PC-9 (cell line): ENCODE measurements at regions of chr1 and their contacts with region 1.

Region 1: DNA sequence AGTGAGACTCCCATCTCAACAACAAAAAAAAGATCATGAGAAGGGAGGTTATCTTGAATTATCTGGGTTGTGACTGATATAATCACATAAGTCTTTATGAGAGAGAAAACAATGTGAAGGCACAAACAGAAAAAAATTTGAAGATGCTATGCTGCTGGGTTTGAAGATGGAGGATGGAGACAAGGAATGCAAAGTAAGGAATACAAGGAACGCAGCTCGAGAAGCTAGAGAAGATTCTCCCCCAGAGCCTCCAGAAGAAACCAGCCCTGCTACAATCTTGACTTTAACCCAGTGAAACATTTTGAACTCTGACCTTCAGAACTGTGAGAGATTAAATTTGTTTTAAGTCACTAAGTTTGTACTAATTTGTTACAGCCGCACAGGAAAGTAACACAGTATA is 15.0 kb downstream of the EVI5 start:
- DNase-seq: no peak
- H3K4me3 ChIP-seq: no peak overlapping the region
- H3K27ac ChIP-seq: no peak overlapping the region
- H3K4me1 ChIP-seq: no peaks in the 10 kb centered on the region
- H3K27me3 ChIP-seq: no peaks in the 10 kb centered on the region
- CTCF ChIP-seq: no peak

Region 2: DNA sequence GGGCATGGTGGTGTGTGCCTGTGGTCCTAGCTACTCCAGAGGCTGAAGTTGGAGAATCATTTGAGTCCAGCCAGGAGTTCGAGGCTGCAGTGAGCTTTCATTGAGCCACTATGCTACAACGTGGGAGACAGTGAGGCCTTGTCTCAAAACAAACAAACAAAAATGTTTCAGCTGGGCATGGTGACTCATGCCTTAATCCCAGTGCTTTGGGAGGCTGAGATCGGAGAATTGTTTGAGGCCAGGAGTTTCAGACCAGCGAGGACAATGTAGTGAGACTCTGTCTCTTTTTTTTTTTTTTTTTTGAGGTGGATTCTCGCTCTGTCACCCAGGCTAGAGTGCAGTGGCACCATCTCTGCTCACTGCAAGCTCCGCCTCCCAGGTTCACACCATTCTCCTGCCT is 56.9 kb after region 1 on chr1:
- CTCF ChIA-PET with region 1: interaction called, 14 read pairs
- POLR2A ChIA-PET with region 1: no interaction called
- intact Hi-C with region 1: no loop called
- DNase-seq: no peak
- H3K4me3 ChIP-seq: no peak overlapping the region
- H3K27ac ChIP-seq: no peak overlapping the region
- H3K4me1 ChIP-seq: peaks cover 16% of the 10 kb centered on the region
- H3K27me3 ChIP-seq: no peaks in the 10 kb centered on the region
- CTCF ChIP-seq: no peak